MCF 10A (cell line): ENCODE measurements at regions of chr10 and their contacts with region 1.

Region 1: DNA sequence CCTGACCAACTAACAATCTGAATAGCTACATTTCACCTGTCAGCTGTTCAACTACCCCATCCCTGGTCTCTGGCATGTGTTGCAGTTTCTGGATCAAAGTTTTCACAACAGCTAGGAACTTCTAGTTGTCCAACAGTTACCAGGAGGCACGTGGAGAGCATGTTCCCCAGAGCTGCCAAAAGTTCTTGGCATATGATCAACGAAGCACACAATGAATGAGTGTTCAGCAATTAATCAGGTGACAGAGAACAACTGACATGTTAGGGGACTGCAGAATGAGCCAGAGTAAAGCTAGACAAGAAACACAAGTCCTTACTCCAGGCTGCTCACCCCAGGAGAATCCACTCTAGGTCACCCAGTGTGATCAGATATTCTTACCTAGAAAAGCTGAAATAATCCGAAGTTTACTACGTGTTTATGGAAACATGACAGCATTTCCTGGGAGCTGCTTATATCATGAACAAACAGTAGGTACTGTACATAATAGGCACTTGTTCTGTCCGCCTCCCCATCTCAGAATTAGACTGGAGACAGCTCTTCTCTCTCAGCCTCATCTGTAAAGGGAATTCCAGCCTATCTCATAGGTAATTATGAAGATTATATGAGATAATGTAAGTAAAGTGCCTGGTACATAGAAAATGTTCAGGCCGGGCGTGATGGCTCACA is 50.6 kb downstream of the ZNF438 start:
- DNase-seq: peak; percentile 89
- H3K4me3 Mint-ChIP-seq: no peak overlapping the region
- H3K27ac Mint-ChIP-seq: peak overlapping the region; percentile 86
- H3K4me1 Mint-ChIP-seq: peaks cover 23% of the 10 kb centered on the region
- H3K27me3 Mint-ChIP-seq: no peaks in the 10 kb centered on the region
- CTCF ChIP-seq: no peak

Region 2: GRCh38 chr10:30915146-30915545 is 65.9 kb before region 1 on chr10:
- CTCF ChIA-PET with region 1: no interaction called
- POLR2A ChIA-PET with region 1: interaction called, 3 read pairs
- intact Hi-C with region 1: loop called (anchors 10 kb)
- DNase-seq: peak; percentile 42
- H3K4me3 Mint-ChIP-seq: no peak overlapping the region
- H3K27ac Mint-ChIP-seq: no peak overlapping the region
- H3K4me1 Mint-ChIP-seq: peaks cover 8% of the 10 kb centered on the region
- H3K27me3 Mint-ChIP-seq: no peaks in the 10 kb centered on the region
- CTCF ChIP-seq: no peak

Region 3: DNA sequence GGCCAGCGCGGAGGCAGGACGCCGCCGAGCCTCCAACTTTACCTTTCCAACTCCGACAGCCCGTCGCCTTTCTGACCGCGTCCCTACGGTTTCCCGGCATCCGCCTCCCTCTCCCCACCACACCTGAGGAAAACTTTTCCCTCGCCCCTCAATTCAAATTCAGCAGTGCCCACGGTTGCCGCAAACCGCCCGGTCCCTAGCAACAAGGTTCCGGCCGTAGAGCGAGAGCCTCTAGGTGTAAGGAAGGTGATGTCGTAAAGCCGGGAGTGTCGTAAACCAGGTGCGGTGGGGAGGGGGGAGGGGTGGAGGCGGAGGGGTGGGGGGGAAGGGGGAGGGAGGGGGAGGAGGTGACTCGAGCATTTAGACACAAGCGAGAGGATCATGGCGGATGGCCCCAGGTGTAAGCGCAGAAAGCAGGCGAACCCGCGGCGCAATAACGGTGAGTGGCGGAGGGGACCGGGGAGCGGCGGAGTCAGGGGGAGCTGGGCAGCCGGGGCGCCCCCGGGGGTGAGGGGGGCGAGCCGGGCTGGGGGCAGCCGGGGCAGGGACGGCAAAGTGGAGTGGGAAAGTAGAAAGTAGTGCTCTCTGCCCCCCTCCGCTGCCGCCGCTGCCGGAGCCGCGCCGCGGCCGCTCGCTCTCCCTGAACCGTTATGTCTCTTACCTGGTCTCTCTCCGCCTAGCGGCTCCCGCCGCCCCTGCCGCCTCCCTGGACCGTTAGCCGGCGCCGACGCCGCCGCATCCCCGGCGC is 337.9 kb after region 1 on chr10 and contains the start of gene ZEB1:
- CTCF ChIA-PET with region 1: no interaction called
- POLR2A ChIA-PET with region 1: interaction called, 7 read pairs
- intact Hi-C with region 1: loop called (anchors 2 kb)
- DNase-seq: peak; percentile 91
- H3K4me3 Mint-ChIP-seq: peak within 1 kb of the TSS; percentile 86
- H3K27ac Mint-ChIP-seq: peak within 1 kb of the TSS; percentile 88
- H3K4me1 Mint-ChIP-seq: peaks cover 27% of the 10 kb centered on the region
- H3K27me3 Mint-ChIP-seq: no peaks in the 10 kb centered on the region
- CTCF ChIP-seq: peak; percentile 43
- total RNA-seq, gene ZEB1: 15.1 and 20.6 TPM in 2 replicates